GM10248 (cell line): ENCODE measurements at regions of chr2 and their contacts with region 1.

Region 1: DNA sequence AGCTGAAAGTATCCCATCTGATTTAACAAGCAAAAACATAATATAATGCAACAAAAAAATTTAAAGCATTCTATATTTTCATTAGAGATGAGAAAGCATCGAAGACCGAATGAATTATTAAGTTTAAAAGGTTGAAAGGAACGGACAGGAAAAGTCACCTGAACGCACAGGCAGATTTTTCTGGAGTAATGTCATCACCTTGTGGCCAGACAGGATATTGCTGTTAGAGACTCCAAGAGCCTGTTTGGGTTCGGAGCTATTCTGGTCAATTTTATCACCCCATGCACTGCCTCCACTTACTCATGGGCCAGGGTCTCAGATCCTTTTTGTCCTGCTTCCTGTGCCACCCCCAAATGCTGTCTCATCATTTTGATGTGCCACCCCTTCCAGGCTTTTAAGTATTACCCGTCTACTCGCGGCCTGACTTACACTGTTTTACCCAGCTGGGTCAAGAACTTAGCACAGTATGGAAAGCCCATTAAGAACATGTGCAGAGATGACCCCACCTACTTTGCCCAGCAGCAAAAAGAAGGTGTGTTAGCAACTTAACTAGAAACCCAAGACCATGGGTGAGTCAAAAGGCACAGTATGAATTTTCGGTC is 27.3 kb downstream of the GKN2 start:
- DNase-seq: peak; percentile 58
- CTCF ChIP-seq: peak; percentile 86

Region 2: DNA sequence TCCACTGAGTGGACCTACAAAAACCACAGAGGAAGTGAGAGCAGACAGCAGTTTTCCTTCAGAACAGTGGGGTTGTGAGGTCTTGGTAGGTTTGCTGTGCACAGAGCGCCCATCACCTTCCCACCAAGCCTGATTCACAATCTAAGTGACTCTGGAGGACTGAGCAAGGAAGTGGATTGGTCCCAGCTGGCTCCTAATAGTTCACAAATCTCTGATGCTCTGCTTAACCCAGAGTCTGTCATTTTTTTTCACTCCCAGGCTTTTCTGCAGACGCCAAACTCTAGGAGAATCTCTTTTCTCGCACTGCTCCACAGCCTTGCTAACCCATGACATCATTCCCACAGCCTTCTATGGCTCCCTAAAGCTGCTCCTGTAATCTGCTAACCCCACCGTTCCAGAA is 1143.0 kb before region 1 on chr2:
- CTCF ChIA-PET with region 1: no interaction called
- POLR2A ChIA-PET with region 1: no interaction called
- DNase-seq: no peak
- CTCF ChIP-seq: no peak

Region 3: DNA sequence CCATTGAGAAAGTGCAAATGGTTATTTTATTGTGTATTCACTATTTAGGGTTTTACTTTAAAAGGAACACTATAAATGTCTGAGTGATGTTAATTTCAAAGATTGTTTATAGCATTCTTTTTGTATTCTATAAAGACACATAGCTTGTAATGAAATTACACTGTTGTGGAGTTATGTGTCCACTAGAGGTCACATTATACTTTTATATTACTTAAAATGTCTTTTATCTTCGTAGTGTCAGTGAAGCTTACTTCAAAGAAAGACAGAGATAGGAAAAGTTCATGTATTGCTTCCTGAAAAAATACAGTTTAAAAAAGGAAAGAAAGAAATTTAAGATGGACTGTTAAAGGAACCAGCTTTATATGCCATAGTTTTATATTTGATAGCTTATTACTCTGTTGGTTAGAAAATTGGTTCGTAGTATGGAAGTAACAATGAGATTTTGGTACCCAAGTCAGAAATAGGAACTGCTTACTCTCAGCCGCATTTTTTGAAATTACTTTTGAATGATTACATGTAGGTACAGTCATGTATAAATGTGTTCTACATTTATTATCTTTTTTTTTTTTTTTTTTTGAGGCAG is 437.5 kb before region 1 on chr2:
- CTCF ChIA-PET with region 1: interaction called, 20 read pairs
- POLR2A ChIA-PET with region 1: no interaction called
- DNase-seq: peak; percentile 38
- CTCF ChIP-seq: peak; percentile 33

Region 4: GRCh38 chr2:68632021-68632420 is 293.4 kb before region 1 on chr2:
- CTCF ChIA-PET with region 1: no interaction called
- POLR2A ChIA-PET with region 1: no interaction called
- DNase-seq: no peak
- CTCF ChIP-seq: no peak

Region 5: DNA sequence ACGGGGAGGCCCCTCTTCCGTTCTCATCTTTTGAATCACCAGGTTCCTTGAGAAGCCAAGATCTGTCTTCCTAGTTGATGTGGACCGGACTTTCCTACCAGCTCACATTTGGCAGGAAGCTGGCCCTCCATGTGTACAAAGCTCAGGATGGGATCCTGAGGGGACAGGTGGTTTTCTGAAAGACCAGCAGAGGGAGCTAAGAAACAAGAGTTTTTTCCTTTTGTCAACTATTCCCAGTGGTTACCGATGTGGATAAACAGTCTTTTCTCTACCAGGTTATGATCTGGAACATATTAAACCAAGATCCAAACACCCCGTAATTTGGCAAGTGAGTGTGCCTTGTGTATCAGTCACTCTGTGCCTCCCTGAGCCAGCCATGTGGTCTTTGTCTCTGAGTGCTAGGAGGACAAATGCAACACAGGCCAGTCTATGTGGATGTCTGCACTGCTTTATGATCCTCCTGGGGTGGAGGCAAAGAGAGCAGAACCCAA is 215.9 kb before region 1 on chr2:
- CTCF ChIA-PET with region 1: interaction called, 31 read pairs
- POLR2A ChIA-PET with region 1: no interaction called
- DNase-seq: no peak
- CTCF ChIP-seq: peak; percentile 50

Region 6: DNA sequence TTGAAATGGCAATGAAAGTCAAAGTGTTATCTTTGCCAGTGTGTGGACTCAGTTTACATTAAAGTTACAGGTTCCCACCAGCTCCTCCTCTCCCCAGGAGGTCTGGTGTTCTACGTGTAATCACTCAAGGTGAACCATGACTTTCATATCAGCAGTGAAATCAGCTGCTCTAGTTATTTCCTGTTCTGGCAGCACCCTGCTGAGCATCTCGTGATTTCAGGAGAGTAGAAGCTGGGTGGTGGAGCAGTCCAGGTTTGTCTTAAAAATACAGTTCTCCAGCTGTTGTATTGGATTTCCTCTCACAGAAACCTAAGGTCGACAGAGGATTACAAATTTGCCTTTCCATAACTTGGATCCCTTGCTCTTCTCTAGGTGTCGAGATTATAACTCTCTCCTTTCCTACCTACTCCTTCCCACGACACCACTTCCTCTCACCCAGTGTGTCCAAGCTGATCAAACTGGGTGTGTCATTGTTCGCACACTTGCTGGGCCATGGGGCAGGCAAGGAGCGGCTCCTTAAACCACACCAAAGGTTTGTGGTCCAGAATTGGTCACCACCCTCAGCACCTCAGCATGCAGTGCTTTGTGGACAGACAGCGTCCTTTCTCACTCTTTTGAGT is 203.8 kb before region 1 on chr2:
- CTCF ChIA-PET with region 1: interaction called, 23 read pairs
- POLR2A ChIA-PET with region 1: no interaction called
- DNase-seq: no peak
- CTCF ChIP-seq: no peak

Region 7: DNA sequence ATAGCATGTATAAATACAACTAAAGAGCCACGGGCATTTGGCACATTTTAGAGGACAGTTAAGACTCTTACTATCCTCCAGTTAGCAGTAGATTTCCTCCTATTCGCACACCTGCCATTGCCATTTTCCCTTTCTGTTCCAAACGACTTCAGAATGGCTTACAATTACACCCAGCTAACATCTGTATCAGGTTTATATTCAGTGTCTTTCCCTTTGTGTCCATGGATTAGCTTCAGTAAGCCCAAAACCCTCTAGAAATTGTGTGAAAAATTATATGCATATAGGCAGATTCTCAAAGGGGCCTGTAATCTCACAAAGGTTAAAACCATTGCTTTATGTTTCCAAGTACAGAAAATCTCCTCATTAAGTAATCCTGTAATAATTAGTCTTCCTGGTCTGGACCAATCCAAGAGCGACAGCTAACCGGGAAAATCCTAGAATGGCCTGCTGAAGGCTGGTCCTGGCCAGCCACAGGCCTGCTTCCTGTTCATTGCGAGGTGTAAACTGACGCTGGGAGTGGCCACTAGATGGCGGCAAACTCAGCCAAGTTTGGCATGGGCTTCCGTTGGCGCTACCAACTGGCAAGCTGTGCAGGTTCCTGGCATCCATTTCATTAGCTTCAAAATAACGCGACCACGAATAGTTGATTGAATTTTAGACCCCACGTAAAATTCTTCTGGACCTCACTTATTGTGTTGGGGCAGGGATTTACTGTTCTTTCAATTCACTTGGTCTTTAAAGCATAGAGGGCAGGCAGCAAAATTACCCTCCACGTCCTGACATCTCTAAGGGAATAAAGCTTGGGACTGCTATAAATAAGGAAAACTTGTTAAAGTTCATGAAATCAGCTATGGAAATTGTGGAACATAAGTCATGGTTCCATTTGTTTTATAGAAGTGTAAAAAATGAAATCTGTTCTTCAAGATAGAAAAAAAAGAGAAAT is 173.7 kb before region 1 on chr2:
- CTCF ChIA-PET with region 1: interaction called, 54 read pairs
- POLR2A ChIA-PET with region 1: no interaction called
- DNase-seq: peak; percentile 75
- CTCF ChIP-seq: peak; percentile 96

Region 8: GRCh38 chr2:68909793-68910674 is 15.4 kb before region 1 on chr2:
- CTCF ChIA-PET with region 1: interaction called, 51 read pairs
- POLR2A ChIA-PET with region 1: no interaction called
- DNase-seq: peak; percentile 70
- CTCF ChIP-seq: peak; percentile 90

Region 9: GRCh38 chr2:68943581-68944568 is 18.5 kb after region 1 on chr2:
- CTCF ChIA-PET with region 1: interaction called, 55 read pairs
- POLR2A ChIA-PET with region 1: no interaction called
- DNase-seq: peak; percentile 55
- CTCF ChIP-seq: peak; percentile 62